ENCODE measurements at regions of chr17 and their contacts with region 1.

Region 1: DNA sequence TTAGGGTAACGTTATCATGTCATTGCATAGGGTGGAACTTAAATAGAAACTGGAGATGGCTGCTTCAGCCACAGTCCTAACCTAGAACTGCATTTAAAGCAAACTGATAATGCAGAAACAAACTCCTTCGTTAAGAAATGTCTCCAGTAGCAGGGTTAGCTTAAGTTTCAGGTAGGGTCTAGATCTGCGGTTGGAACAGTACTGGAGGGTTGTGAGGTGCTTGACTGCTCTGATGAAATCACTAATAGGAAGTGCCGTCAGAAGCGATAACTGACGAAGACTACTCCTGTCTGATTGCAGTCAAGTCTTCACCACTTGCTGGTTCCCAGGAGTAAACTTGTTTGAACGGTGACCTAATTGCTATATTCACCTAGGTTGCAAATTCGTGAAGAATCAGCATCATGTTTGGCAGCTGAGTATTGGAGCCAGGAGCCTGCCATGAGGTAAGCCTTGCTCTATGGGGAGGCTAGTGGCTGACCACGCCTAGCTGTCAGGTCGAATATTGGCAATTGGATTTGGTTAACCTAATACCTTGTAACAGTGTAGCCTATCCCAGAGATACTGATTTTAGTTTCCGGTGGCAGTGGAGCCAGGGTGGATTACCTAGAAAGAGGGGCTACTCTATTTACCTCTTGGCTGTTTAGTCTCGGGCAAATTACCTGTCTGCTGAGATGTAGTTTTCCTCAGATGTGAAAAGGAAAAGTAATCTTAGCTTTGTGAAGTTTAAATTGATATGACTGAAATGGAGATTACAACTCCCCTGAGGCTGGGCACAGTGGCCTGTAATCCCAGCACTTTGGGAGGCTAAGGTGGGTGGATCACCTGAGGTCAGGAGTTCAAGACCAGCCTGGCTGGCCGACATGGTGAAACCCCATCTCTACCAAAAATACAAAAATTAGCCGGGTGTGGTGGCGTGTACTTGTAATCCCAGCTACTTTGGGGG is 24.7 kb downstream of the TRPV2 start:
- DNase-seq: peak; percentile 44 to 65 (median 60)
- ATAC-seq: peak; percentile 18
- H3K4me3 ChIP-seq: peak overlapping the region; percentile 25 to 89
- H3K27ac ChIP-seq: peak overlapping the region; percentile 77 to 85 (median 84)
- H3K4me1 ChIP-seq: peaks cover 60% of the 10 kb centered on the region
- H3K27me3 ChIP-seq: no peaks in the 10 kb centered on the region
- CTCF ChIP-seq: peak in 1 of 7 experiments; percentile 2
- POLR2A ChIP-seq: peak in 2 of 3 donors; percentile 63 to 65

Region 2: GRCh38 chr17:16398270-16399267 is 41.5 kb before region 1 on chr17:
- intact Hi-C with region 1: loop called (anchors 10 kb)
- DNase-seq: peak in 2 of 4 donors; percentile 15 to 38
- ATAC-seq: peak; percentile 24
- H3K4me3 ChIP-seq: no peak overlapping the region
- H3K27ac ChIP-seq: peak overlapping the region in 3 of 4 donors; percentile 0 to 15 (median 10)
- H3K4me1 ChIP-seq: peaks cover 29% of the 10 kb centered on the region
- H3K27me3 ChIP-seq: no peaks in the 10 kb centered on the region
- CTCF ChIP-seq: no peak
- POLR2A ChIP-seq: no peak

Measured in body of pancreas (tissue), 4 donors.